ENCODE measurements at regions of chr12 and their contacts with region 1.

Region 1: DNA sequence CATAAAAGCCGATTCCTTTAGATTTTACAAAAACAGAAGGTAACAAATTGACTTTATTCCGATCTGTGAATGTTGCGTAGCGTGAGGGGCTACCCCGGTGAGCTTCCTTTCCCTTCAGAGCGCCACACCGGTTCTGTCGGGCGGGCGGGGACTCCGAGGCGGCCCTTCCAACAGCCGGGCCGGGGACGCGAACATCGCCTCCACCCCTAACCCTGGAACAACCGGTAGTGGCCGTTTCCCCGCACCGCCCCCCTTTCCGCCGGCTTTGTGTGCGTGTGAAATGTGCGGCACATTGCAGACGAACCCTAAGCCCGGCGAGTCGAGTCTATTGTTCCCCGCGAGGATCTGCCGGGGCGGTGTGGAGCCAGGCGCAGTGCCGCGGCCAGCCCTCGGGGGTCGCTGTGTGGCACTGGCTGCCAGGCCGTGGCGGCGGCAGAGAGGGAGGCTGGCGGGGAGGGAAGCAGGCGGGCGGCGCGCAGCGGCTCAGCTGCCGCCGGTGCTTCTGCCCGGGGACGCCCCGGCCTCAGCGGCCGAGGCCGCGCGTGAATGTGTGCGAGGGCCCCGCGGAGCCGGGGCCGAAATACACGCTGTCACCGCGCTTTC is 775 bp upstream of the ARID2 start:
- DNase-seq: peak; percentile 93 to 99 (median 98)
- ATAC-seq: peak; percentile 63 to 74
- H3K4me3 Mint-ChIP-seq: peak overlapping the region; percentile 93 to 100 (median 100)
- H3K27ac Mint-ChIP-seq: peak overlapping the region; percentile 96 to 100 (median 98)
- H3K4me1 Mint-ChIP-seq: peaks cover 14 to 36% (median 24%) of the 10 kb centered on the region in 4 donors
- H3K27me3 Mint-ChIP-seq: no peaks in the 10 kb centered on the region

Region 2: GRCh38 chr12:45644541-45644940 is 84.2 kb before region 1 on chr12:
- POLR2A ChIA-PET with region 1: no interaction called
- DNase-seq: no peak
- ATAC-seq: no peak
- H3K4me3 Mint-ChIP-seq: peak overlapping the region in 8 of 10 donors; percentile 7 to 64 (median 54)
- H3K27ac Mint-ChIP-seq: peak overlapping the region in 9 of 10 donors; percentile 0 to 74 (median 33)
- H3K4me1 Mint-ChIP-seq: peaks cover 6 to 12% (median 11%) of the 10 kb centered on the region in 4 donors
- H3K27me3 Mint-ChIP-seq: peaks cover 0 to 3% (median 2%) of the 10 kb centered on the region in 5 donors

Region 3: GRCh38 chr12:45655201-45655600 is 73.5 kb before region 1 on chr12:
- POLR2A ChIA-PET with region 1: interaction called, 12 read pairs
- DNase-seq: peak; percentile 26 to 86 (median 61)
- ATAC-seq: peak; percentile 100
- H3K4me3 Mint-ChIP-seq: no peak overlapping the region
- H3K27ac Mint-ChIP-seq: no peak overlapping the region
- H3K4me1 Mint-ChIP-seq: peaks cover 0 to 9% (median 3%) of the 10 kb centered on the region in 4 donors
- H3K27me3 Mint-ChIP-seq: peaks cover 0 to 8% (median 3%) of the 10 kb centered on the region in 5 donors

Region 4: DNA sequence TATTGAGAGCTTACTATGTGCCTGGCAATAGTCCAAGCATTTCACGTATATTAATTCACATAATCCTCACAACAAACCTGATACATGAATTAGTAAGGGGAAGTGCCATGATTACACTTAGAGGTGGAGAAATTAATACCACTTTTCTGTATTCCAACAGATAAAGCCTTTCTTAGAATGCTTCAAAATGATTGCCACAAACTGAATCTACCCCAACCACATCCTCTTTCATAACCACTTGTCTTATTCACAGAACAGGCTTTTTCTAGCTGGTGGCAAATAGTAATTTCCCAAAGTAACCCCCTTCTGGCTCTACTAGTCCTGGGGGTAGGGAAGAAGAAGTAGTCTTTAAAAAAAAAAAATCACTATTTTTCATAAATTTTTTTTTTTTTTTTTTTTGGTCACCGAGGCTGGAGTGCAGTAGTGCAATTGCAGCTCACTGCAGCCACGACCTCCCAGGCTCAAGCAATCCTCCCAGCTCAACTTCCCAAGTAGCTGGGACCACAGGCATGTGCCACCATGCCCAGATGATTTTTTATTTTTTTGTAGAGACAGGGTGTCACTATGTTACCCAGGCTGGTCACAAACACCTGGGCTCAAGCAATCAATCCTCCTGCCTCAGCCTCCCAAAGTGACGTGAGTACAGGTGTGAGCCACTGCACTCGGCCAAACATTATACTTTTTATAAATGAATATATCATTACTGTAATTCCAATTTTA is 58.2 kb before region 1 on chr12:
- POLR2A ChIA-PET with region 1: interaction called, 62 read pairs
- DNase-seq: peak in 4 of 10 donors; percentile 12 to 65 (median 46)
- ATAC-seq: peak; percentile 74 to 88
- H3K4me3 Mint-ChIP-seq: peak overlapping the region in 6 of 10 donors; percentile 0 to 80 (median 37)
- H3K27ac Mint-ChIP-seq: peak overlapping the region in 1 of 10 donors; percentile 77
- H3K4me1 Mint-ChIP-seq: peaks cover 6 to 32% (median 21%) of the 10 kb centered on the region in 4 donors
- H3K27me3 Mint-ChIP-seq: no peaks in the 10 kb centered on the region

Region 5: DNA sequence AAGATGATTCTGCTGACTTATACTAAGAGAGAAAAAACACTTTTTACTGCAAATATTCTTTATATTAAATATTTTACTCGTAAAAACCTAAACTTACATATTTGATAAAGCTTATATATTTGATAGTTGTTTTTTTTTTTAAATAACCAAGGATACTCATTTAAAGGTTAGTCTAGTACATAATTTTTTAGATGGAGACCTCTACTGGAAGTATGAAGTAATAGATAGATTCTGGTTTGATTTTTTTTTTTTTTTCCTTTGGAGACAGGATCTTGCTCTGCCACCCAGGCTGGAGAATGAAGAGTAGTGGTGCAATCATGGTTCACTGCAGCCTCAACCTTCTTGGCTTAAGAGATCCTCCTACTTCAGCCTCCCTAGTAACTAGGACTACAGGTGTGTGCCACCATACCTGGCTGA is 17.1 kb after region 1 on chr12:
- POLR2A ChIA-PET with region 1: interaction called, 29 read pairs
- DNase-seq: peak in 3 of 10 donors; percentile 38 to 52 (median 44)
- ATAC-seq: peak; percentile 73 to 76
- H3K4me3 Mint-ChIP-seq: peak overlapping the region in 1 of 10 donors; percentile 11
- H3K27ac Mint-ChIP-seq: peak overlapping the region in 1 of 10 donors; percentile 7
- H3K4me1 Mint-ChIP-seq: peaks cover 22 to 75% (median 60%) of the 10 kb centered on the region in 4 donors
- H3K27me3 Mint-ChIP-seq: no peaks in the 10 kb centered on the region

Region 6: GRCh38 chr12:45990468-45991283 is 261.9 kb after region 1 on chr12 and contains the start of gene SCAF11:
- POLR2A ChIA-PET with region 1: interaction called, 57 read pairs
- DNase-seq: peak; percentile 100
- ATAC-seq: peak; percentile 71 to 76
- H3K4me3 Mint-ChIP-seq: peak within 1 kb of the TSS; percentile 89 to 100 (median 96)
- H3K27ac Mint-ChIP-seq: peak within 1 kb of the TSS; percentile 93 to 100 (median 100)
- H3K4me1 Mint-ChIP-seq: peaks cover 33 to 52% (median 43%) of the 10 kb centered on the region in 4 donors
- H3K27me3 Mint-ChIP-seq: peaks cover 0 to 4% (median 0%) of the 10 kb centered on the region in 5 donors
- polyA plus RNA-seq, gene SCAF11: 71.1 to 93.5 (median 89.1) TPM

Region 7: GRCh38 chr12:46492471-46493351 is 764.0 kb after region 1 on chr12:
- POLR2A ChIA-PET with region 1: no interaction called
- DNase-seq: no peak
- ATAC-seq: no peak
- H3K4me3 Mint-ChIP-seq: no peak overlapping the region
- H3K27ac Mint-ChIP-seq: no peak overlapping the region
- H3K4me1 Mint-ChIP-seq: peaks cover 0 to 5% (median 2%) of the 10 kb centered on the region in 4 donors
- H3K27me3 Mint-ChIP-seq: no peaks in the 10 kb centered on the region